ENCODE measurements at regions of chr5 and their contacts with region 1.

Region 1: GRCh38 chr5:177390363-177391300 is 6.4 kb downstream of the SLC34A1 start:
- DNase-seq: peak; percentile 83 to 96
- ATAC-seq: peak; percentile 71 to 89 (median 84)
- H3K4me3 ChIP-seq: no peak overlapping the region
- H3K4me3 Mint-ChIP-seq: peak overlapping the region; percentile 52
- H3K27ac ChIP-seq: peak overlapping the region; percentile 79
- H3K27ac Mint-ChIP-seq: peak overlapping the region; percentile 81 to 82
- H3K4me1 ChIP-seq: peaks cover 59% of the 10 kb centered on the region
- H3K4me1 Mint-ChIP-seq: peaks cover 30 to 34% of the 10 kb centered on the region in 2 donors
- H3K27me3 ChIP-seq: no peaks in the 10 kb centered on the region
- H3K27me3 Mint-ChIP-seq: peaks cover 0 to 2% of the 10 kb centered on the region in 2 donors
- CTCF ChIP-seq: peak; percentile 95

Region 2: DNA sequence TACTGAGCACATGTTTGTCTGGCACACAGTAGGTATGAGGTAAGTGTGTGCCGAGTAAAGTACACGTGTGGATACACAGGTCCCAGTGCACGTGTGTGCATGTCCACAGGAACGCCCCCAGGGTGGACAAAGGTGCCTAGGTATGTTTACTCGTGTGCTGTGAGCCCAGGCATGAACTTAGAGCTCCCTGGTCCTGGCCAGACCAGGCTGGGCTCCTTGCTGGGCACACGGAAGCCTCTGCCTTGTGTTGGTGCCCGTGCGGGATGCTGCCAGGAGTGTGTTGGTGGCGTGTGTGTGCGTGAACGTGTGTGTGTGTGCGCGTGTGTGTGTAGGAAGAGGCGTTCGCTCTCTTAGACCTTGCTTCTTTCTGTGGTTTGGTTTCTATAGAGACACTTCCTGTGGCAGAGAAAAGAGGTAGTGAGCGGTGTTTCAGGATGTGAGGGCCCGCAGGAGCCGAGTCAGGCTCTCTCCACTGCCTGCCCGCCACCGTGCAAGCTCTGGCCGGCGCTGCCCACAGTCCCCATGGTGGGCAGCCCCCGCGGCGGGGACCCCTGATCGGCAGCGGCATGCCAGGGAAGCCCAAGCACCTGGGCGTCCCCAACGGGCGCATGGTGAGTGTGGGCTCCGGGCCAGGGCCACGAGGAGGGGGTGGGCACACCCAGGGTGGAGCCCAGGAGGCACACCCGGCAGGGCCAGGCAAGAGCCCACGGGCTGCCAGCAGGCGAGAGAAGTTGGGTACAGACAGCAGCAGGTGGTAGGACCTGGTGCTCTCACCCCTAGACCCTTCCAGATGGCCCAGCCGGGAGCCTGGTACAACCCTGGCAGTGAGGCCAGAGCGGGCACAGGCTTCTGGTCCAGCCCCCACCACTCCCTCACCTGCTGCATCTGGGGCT is 32.9 kb before region 1 on chr5 and contains the start of gene RGS14:
- intact Hi-C with region 1: loop called (anchors 5 kb)
- DNase-seq: peak; percentile 55 to 90
- ATAC-seq: peak; percentile 92 to 95 (median 95)
- H3K4me3 ChIP-seq: peak within 1 kb of the TSS; percentile 85
- H3K4me3 Mint-ChIP-seq: peak within 1 kb of the TSS; percentile 90
- H3K27ac ChIP-seq: peak within 1 kb of the TSS; percentile 51
- H3K27ac Mint-ChIP-seq: peak within 1 kb of the TSS; percentile 88 to 89
- H3K4me1 ChIP-seq: peaks cover 73% of the 10 kb centered on the region
- H3K4me1 Mint-ChIP-seq: peaks cover 64 to 72% of the 10 kb centered on the region in 2 donors
- H3K27me3 ChIP-seq: no peaks in the 10 kb centered on the region
- H3K27me3 Mint-ChIP-seq: no peaks in the 10 kb centered on the region
- CTCF ChIP-seq: no peak
- total RNA-seq, gene RGS14: 57.3 to 87.0 (median 66.1) TPM

Region 3: GRCh38 chr5:177403792-177404640 is 13.4 kb after region 1 on chr5:
- intact Hi-C with region 1: loop called (anchors 1 kb)
- DNase-seq: peak; percentile 81 to 94
- ATAC-seq: peak; percentile 80 to 91 (median 81)
- H3K4me3 ChIP-seq: peak overlapping the region; percentile 36
- H3K4me3 Mint-ChIP-seq: peak overlapping the region; percentile 72
- H3K27ac ChIP-seq: peak overlapping the region; percentile 51
- H3K27ac Mint-ChIP-seq: peak overlapping the region; percentile 62 to 84
- H3K4me1 ChIP-seq: peaks cover 51% of the 10 kb centered on the region
- H3K4me1 Mint-ChIP-seq: peaks cover 37 to 45% of the 10 kb centered on the region in 2 donors
- H3K27me3 ChIP-seq: peaks cover 22% of the 10 kb centered on the region
- H3K27me3 Mint-ChIP-seq: peaks cover 13 to 17% of the 10 kb centered on the region in 2 donors
- CTCF ChIP-seq: peak; percentile 66

Region 4: GRCh38 chr5:177497292-177498033 is 106.8 kb after region 1 on chr5 and contains the start of gene PDLIM7:
- intact Hi-C with region 1: loop called (anchors 1 kb)
- DNase-seq: peak; percentile 90 to 97
- ATAC-seq: peak; percentile 88 to 94 (median 89)
- H3K4me3 ChIP-seq: peak within 1 kb of the TSS; percentile 47
- H3K4me3 Mint-ChIP-seq: peak within 1 kb of the TSS; percentile 82
- H3K27ac ChIP-seq: no peak within 1 kb of the TSS
- H3K27ac Mint-ChIP-seq: peak within 1 kb of the TSS; percentile 47 to 56
- H3K4me1 ChIP-seq: peaks cover 72% of the 10 kb centered on the region
- H3K4me1 Mint-ChIP-seq: peaks cover 18 to 55% of the 10 kb centered on the region in 2 donors
- H3K27me3 ChIP-seq: peaks cover 5% of the 10 kb centered on the region
- H3K27me3 Mint-ChIP-seq: peaks cover 10 to 14% of the 10 kb centered on the region in 2 donors
- CTCF ChIP-seq: no peak
- total RNA-seq, gene PDLIM7: 9.7 to 58.7 (median 14.7) TPM

Region 5: DNA sequence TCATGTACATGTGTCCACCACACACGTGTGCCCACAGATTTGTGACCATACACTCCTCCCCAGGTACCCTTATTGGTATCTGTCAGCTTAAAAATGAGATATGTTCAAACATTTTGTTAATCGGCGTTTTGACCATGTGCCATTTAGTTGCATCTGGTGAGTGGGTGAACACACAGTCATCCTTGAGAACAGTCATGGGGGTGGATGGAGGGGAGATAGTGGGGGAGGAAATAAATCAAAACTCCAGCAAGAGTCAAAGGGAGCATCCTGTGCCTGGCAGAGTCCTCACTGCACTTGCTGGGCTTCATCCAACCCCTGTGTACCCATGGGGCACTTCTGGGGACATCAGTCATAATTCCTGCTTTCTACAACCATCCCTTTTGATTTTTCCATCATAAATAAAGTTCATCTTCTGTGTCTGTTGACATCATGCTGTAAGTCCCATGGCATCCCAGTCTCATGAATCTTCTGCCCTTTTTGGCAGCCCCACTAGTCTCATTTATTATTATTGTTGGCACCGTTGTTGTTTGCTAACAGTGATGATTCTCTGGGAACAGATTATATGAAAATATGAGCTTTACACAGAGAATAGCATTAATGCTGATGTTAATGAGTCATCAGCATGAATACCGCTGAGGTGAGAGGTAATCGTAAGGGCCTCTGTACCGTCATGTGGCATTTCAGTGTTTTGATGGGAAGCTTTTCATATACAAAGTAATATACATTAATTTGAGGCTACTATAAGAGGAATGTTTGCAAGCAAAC is 1260.6 kb after region 1 on chr5:
- intact Hi-C with region 1: no loop called
- DNase-seq: no peak
- ATAC-seq: no peak
- H3K4me3 ChIP-seq: no peak overlapping the region
- H3K4me3 Mint-ChIP-seq: no peak overlapping the region
- H3K27ac ChIP-seq: no peak overlapping the region
- H3K27ac Mint-ChIP-seq: no peak overlapping the region
- H3K4me1 ChIP-seq: no peaks in the 10 kb centered on the region
- H3K4me1 Mint-ChIP-seq: no peaks in the 10 kb centered on the region
- H3K27me3 ChIP-seq: no peaks in the 10 kb centered on the region
- H3K27me3 Mint-ChIP-seq: peaks cover 16 to 17% of the 10 kb centered on the region in 2 donors
- CTCF ChIP-seq: no peak

Measured in natural killer cell (primary cell).